ENCODE measurements at regions of chr7 and their contacts with region 1.

Region 1: GRCh38 chr7:129091484-129092002 is 36.6 kb upstream of the TNPO3 start:
- DNase-seq: peak; percentile 88
- H3K4me3 Mint-ChIP-seq: no peak overlapping the region
- H3K27ac Mint-ChIP-seq: no peak overlapping the region
- H3K4me1 Mint-ChIP-seq: peaks cover 33% of the 10 kb centered on the region
- H3K27me3 Mint-ChIP-seq: peaks cover 7% of the 10 kb centered on the region

Region 2: DNA sequence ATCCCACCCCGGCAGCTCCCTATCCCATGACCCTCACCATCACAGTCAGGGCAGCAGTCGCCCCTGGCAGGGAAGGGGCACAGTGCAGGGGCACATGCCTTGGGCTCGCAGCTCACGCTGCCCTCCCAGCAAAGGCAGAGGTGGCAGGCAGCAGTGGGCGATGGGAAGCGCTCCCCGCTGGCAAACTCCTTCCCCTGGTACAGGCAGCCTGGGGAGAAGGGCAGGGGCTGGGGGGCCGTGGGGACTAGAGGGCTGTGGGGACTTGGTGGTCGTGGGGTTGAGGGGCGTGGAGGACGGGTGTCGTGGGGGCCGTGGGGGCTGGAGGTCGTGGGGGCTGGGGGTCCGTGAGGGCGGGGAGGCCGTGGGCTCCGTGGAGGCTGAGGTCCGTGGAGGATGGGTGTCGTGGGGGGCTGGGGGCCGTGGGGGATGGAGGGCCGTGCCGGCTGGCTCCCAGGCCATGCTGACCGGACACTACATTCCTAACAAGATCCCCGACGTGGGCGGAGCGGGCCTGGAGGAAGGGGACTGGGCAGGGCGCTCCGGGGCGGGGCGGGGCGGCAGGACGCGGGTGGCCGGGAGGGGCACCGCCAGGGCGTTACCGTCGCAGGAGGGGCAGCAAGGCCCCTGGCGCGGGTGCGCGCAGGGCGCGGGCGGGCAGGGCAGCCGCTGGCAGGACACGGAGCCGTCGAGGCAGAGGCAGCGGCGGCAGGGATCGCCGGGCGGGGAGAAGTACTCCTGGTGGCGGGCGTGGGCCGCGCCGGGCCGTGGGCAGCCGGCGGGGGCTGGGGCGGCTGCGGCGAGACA is 201.0 kb before region 1 on chr7:
- CTCF ChIA-PET with region 1: no interaction called
- POLR2A ChIA-PET with region 1: no interaction called
- DNase-seq: no peak
- H3K4me3 Mint-ChIP-seq: no peak overlapping the region
- H3K27ac Mint-ChIP-seq: no peak overlapping the region
- H3K4me1 Mint-ChIP-seq: peaks cover 1% of the 10 kb centered on the region
- H3K27me3 Mint-ChIP-seq: peaks cover 14% of the 10 kb centered on the region

Region 3: GRCh38 chr7:128904381-128905197 is 187.0 kb before region 1 on chr7:
- CTCF ChIA-PET with region 1: interaction called, 12 read pairs
- POLR2A ChIA-PET with region 1: interaction called, 4 read pairs
- DNase-seq: peak; percentile 27
- H3K4me3 Mint-ChIP-seq: no peak overlapping the region
- H3K27ac Mint-ChIP-seq: no peak overlapping the region
- H3K4me1 Mint-ChIP-seq: no peaks in the 10 kb centered on the region
- H3K27me3 Mint-ChIP-seq: peaks cover 27% of the 10 kb centered on the region

Region 4: GRCh38 chr7:129030440-129030839 is 61.1 kb before region 1 on chr7:
- CTCF ChIA-PET with region 1: no interaction called
- POLR2A ChIA-PET with region 1: no interaction called
- DNase-seq: no peak
- H3K4me3 Mint-ChIP-seq: no peak overlapping the region
- H3K27ac Mint-ChIP-seq: no peak overlapping the region
- H3K4me1 Mint-ChIP-seq: peaks cover 7% of the 10 kb centered on the region
- H3K27me3 Mint-ChIP-seq: no peaks in the 10 kb centered on the region

Region 5: DNA sequence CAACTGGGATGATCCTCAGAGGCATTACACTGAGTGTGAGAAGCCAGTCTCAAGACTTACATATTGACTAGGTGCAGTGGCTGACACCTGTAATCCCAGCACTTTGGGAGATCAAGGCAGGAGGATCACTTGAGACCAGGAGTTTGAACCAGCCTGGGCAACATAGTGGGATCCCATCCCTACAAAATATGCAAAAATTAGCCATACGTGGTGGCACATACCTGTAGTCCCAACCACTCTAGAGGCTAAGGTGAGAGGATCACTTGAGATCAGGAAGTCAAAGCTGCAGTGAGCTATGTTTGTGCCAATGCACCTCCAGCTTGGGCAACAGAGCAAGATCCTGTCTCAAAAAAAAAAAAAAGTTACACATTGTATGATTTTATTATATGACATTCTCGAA is 13.1 kb before region 1 on chr7:
- CTCF ChIA-PET with region 1: interaction called, 18 read pairs
- POLR2A ChIA-PET with region 1: no interaction called
- DNase-seq: no peak
- H3K4me3 Mint-ChIP-seq: no peak overlapping the region
- H3K27ac Mint-ChIP-seq: no peak overlapping the region
- H3K4me1 Mint-ChIP-seq: no peaks in the 10 kb centered on the region
- H3K27me3 Mint-ChIP-seq: peaks cover 7% of the 10 kb centered on the region

Region 6: DNA sequence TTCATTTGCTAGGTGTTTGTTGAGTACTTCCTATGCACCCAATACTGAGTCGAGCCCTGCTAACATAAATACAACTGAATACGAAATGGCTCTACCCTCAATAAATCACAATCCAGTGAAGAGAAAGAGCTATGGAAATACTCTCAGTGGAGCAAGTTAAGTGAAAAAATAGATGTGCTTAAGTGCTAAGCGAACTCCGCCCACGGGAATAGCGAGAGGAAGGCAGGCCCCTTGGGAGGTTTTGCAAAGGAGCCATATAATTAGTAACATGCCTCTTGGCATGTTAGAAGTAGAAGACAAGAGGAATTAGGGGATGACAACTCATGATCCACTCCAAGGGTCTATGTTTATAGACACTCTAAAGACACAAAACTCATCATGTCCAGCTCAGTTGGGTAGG is 10.2 kb after region 1 on chr7:
- CTCF ChIA-PET with region 1: interaction called, 20 read pairs
- POLR2A ChIA-PET with region 1: no interaction called
- DNase-seq: no peak
- H3K4me3 Mint-ChIP-seq: no peak overlapping the region
- H3K27ac Mint-ChIP-seq: no peak overlapping the region
- H3K4me1 Mint-ChIP-seq: no peaks in the 10 kb centered on the region
- H3K27me3 Mint-ChIP-seq: peaks cover 5% of the 10 kb centered on the region

Region 7: DNA sequence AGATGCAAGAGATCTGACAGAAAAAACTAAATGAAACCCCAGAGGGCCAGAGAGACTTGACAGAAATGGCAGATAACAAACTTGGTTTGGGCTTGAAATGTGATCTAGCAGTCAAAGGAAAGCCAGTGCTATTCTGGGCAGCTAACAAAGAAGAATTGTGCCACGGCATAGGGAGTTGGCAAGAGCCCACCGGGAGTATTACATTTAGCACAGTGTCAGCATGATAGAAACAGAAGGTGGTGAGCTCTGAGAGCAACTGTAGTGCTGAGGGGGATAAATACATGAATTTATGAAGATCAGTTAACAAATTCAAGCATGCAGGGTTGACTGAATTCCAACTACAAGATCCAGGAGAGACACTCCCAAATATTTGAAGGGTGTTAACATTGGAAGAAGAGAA is 224.4 kb after region 1 on chr7:
- CTCF ChIA-PET with region 1: no interaction called
- POLR2A ChIA-PET with region 1: no interaction called
- DNase-seq: no peak
- H3K4me3 Mint-ChIP-seq: no peak overlapping the region
- H3K27ac Mint-ChIP-seq: no peak overlapping the region
- H3K4me1 Mint-ChIP-seq: no peaks in the 10 kb centered on the region
- H3K27me3 Mint-ChIP-seq: no peaks in the 10 kb centered on the region